ENCODE measurements at regions of chr6 and their contacts with region 1.

Region 1: DNA sequence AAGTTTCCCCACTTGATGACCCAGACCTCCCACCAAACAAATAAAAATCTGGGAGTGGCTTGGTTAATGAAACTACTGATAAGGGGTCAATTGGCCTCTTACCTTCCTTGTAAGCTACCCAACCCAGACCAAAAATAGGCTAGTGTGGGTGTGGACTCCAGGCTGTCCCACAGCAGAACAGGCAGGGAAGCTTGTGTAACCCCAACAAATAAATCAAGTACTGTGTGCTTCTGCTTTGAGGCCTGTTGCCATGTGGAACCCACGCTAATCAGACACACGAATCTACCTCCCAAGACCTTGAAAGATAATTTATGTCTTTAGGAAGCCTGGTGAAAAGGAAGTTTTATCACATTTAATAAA is 33.7 kb upstream of the PAQR8 start:
- DNase-seq: no peak
- H3K4me3 ChIP-seq: no peak overlapping the region
- H3K27ac ChIP-seq: no peak overlapping the region
- H3K4me1 ChIP-seq: no peaks in the 10 kb centered on the region
- H3K27me3 ChIP-seq: no peaks in the 10 kb centered on the region
- CTCF ChIP-seq: no peak
- POLR2A ChIP-seq: no peak

Region 2: DNA sequence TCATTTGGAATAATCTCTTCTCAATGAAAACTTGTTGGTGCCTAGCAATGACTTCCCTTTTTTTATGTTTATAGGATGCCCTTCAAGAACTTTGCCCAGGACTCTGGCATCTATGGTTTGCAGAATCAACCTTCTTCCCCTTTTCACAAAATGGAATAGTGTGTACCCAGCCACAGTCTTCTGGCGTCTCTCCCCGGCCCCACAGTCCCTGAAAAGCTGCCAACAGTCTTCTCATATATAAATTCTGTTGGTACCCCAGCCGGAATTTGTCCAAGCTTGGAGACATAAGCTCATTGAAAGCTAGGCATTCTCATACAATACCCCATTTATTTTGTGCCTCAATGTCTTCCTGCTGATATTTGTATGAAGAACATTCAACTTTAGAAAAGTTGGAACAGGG is 17.4 kb before region 1 on chr6:
- intact Hi-C with region 1: loop called (anchors 2 kb)
- DNase-seq: no peak
- H3K4me3 ChIP-seq: no peak overlapping the region
- H3K27ac ChIP-seq: no peak overlapping the region
- H3K4me1 ChIP-seq: no peaks in the 10 kb centered on the region
- H3K27me3 ChIP-seq: no peaks in the 10 kb centered on the region
- CTCF ChIP-seq: no peak
- POLR2A ChIP-seq: no peak

Region 3: DNA sequence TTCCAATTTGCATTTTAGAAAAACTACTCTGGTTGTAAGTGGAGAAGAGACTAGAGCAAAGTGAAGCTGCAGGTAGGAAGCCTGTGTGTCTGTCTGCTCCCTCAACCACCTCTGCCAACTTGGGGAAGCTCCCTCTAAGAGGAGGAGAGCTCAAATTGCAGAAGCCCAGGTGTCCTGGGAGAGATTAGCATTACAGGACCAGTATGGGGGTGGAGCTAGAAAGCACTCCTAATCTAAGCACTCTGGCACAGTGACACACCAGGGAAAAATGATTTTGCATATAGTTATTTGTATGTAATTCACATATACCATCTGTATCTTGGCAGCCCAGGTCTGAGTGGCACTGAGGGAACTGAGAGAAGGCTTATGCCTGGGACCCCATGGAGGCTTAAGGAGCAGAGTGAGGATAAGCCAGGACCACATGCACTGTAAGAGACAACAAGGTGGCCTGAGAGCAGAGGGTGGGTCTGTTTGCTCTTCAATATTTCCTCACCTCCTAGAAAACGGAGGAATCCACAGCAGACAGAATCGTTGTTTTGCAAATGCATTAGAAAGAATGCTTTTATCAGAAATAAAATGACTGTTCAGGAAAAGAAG is 421.4 kb after region 1 on chr6:
- intact Hi-C with region 1: no loop called
- DNase-seq: no peak
- H3K4me3 ChIP-seq: no peak overlapping the region
- H3K27ac ChIP-seq: no peak overlapping the region
- H3K4me1 ChIP-seq: no peaks in the 10 kb centered on the region
- H3K27me3 ChIP-seq: no peaks in the 10 kb centered on the region
- CTCF ChIP-seq: no peak
- POLR2A ChIP-seq: no peak